GM13976 (cell line): ENCODE measurements at regions of chr2 and their contacts with region 1.

Region 1: DNA sequence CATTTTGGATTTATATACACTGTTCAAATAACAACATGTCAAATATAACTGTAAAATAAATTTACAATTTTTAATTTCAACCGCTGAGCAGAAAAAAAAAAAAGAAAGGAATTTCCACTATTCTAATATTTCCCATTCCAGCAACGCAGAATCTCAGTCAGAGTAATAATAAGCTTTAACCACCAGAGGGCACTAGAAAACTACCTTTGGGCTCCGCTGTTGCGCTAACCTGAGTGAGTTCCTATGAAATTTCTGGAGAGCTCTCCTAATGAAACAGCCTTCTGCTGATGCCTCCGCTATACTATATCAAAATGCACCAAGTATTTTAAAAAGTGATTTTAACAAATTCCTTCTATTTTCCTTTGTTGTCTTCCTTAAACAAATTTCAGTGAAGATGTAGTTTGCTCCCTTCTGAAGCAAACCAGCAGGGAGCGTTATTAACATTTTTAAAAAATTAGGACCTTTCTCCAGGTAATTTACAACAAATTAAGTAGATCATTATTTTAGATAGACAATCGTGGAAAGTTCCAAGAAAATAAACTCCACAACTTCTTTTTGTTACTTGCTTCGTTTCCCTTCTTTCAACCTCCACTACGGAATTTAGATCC is 23.0 kb downstream of the ERMN start:
- DNase-seq: peak; percentile 34
- CTCF ChIP-seq: peak; percentile 59

Region 2: GRCh38 chr2:157480182-157480961 is 177.8 kb after region 1 on chr2:
- in situ Hi-C with region 1: loop called (anchors 10 kb)
- DNase-seq: peak; percentile 30
- CTCF ChIP-seq: no peak

Region 3: DNA sequence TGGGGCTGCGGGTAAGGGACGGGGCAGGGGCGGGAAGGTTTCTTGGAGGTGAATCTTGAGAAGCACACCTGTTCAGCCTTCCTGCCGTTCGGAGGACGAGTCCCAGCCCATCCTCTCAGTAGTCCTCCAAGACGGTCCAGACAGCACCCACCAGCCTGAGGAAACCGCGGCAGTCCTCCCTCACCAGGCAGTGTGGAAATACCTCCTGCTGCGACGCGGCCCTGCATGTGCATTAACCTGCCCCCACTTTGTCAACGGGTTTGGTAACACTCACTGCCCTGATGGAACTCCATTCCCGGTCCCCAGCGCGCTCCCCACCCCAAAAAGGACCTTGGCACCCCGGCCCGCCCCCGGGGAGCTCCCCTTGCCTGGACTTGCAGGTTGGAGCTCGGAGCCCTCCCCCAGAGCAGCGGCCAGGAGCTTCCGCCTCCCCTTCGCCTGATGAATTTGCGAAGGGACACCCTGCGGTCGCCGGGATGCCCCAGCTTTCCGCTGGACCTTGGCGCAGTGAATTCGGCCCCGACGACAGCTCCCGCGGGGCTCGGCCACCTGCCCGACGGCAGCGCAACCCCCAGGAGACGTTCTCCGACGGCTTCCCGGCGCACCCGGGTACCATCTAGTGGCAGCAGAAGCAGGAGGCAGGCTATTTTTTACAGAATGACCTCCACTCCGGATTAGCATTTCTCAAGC is 294.5 kb after region 1 on chr2:
- in situ Hi-C with region 1: loop called (anchors 10 kb)
- DNase-seq: peak; percentile 63
- CTCF ChIP-seq: peak; percentile 39

Region 4: DNA sequence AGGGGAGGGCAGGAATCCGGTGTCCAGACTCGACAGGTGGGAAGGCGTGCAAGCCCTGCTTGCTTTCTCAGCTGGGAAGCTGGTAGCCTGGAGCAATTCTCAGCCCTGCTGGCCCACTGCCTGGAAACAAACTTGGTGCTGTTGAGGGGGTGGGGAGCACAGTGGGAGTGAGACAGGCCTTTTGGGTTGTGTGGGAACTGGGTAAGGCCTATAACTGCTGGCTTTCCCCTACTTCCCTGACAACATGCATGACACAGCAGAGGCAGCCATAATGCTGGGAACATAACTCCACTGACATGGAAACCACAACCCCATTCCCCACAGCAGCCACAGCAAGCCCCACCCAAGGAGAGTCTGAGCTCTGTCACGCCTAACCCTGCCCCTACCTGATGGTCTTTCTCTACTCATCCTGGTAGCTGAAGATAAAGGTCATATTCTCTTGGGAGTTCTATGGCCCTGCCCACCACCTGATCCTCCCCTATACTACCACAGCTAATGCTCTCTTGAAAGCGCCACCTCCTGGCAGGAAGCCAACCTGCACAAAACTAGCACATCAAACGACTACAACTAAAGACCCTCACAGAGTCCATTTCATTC is 449.0 kb after region 1 on chr2:
- in situ Hi-C with region 1: loop called (anchors 25 kb)
- DNase-seq: no peak
- CTCF ChIP-seq: peak; percentile 15